MCF 10A (cell line): ENCODE measurements at regions of chr20 and their contacts with region 1.

Region 1: GRCh38 chr20:36439040-36439730 is 102.1 kb upstream of the MYL9 start:
- DNase-seq: peak; percentile 61
- H3K4me3 Mint-ChIP-seq: no peak overlapping the region
- H3K27ac Mint-ChIP-seq: no peak overlapping the region
- H3K4me1 Mint-ChIP-seq: no peaks in the 10 kb centered on the region
- H3K27me3 Mint-ChIP-seq: no peaks in the 10 kb centered on the region
- CTCF ChIP-seq: peak; percentile 96

Region 2: GRCh38 chr20:36181934-36182603 is 257.1 kb before region 1 on chr20:
- CTCF ChIA-PET with region 1: interaction called, 10 read pairs
- POLR2A ChIA-PET with region 1: no interaction called
- intact Hi-C with region 1: no loop called
- DNase-seq: peak; percentile 7
- H3K4me3 Mint-ChIP-seq: no peak overlapping the region
- H3K27ac Mint-ChIP-seq: no peak overlapping the region
- H3K4me1 Mint-ChIP-seq: no peaks in the 10 kb centered on the region
- H3K27me3 Mint-ChIP-seq: no peaks in the 10 kb centered on the region
- CTCF ChIP-seq: no peak

Region 3: GRCh38 chr20:36214684-36215256 is 224.4 kb before region 1 on chr20:
- CTCF ChIA-PET with region 1: interaction called, 56 read pairs
- POLR2A ChIA-PET with region 1: no interaction called
- intact Hi-C with region 1: loop called (anchors 1 kb)
- DNase-seq: peak; percentile 51
- H3K4me3 Mint-ChIP-seq: no peak overlapping the region
- H3K27ac Mint-ChIP-seq: no peak overlapping the region
- H3K4me1 Mint-ChIP-seq: no peaks in the 10 kb centered on the region
- H3K27me3 Mint-ChIP-seq: peaks cover 13% of the 10 kb centered on the region
- CTCF ChIP-seq: peak; percentile 56

Region 4: DNA sequence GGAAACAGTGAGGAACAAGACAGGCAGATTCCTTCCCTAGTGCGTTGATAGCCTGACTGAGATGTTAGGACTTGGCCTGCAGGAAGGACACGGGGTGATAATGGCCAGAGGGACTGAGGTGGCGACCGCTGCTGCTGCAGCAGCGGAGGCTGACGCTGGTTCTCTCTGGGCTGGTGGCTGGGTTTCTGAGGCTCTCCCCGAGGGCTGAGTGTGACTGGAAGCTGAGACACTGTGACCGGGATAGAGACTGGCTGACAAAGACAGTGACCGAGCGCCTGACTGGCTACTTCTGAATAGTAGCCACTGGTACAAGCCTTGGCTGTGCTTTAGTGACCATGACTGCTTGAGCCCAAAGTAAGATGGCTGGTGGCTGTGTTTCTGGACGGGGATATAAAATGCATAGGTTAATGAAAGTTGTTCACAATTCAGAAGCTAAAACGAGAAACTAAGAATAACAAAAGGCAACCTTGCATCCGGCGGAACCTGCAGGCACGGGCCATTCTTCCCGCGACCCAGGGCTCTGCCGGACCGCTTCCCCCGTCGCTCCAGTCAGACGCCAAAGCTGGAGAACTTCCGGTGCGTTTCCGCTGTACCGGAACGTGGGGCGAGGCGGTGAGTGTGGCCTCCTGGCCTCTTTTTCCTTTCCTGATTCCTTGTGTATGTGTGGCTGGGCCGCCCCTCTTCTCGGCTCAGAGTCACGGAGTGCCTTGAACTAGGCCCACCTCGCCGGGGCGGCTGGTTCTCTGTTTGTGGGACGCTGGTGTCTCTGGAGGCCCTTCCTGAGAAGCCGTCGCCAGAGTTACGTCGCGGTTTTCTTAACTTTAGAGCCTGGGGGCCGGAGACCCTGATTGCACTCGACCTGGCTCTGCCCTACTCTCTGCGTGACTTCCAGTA is 203.0 kb before region 1 on chr20 and contains the start of gene AAR2:
- CTCF ChIA-PET with region 1: interaction called, 31 read pairs
- POLR2A ChIA-PET with region 1: interaction called, 5 read pairs
- intact Hi-C with region 1: no loop called
- DNase-seq: peak; percentile 74
- H3K4me3 Mint-ChIP-seq: peak within 1 kb of the TSS; percentile 75
- H3K27ac Mint-ChIP-seq: peak within 1 kb of the TSS; percentile 98
- H3K4me1 Mint-ChIP-seq: peaks cover 15% of the 10 kb centered on the region
- H3K27me3 Mint-ChIP-seq: no peaks in the 10 kb centered on the region
- CTCF ChIP-seq: no peak
- total RNA-seq, gene AAR2: 21.0 and 24.7 TPM in 2 replicates

Region 5: DNA sequence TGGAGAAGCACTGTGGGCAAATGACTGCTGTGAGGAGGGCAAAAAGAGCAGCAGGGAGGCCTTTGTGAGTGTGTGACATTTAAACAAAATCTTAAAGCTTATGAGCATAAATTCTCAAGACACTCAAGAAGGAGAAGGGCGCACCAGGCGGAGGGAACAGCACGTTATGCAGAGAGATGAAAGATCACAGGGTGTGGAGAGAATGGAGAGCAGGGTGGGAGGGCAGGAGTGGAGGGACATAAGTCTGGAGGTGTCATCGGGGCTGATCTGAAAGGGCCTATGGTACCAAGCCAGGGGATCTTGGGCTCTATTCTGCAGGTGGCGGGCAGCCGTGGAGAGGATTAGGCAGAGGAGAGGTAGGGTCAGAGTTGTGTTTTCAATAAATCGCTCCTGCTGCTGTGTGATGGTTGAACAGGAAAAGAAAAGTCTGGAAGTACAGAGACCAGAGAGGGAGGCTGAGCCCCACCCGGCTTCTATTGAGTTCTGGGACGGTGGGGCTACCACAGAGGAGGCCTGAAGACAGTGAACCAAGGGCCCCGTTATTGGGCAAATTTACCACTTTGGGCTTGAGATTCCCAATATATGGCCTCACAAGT is 157.3 kb before region 1 on chr20:
- CTCF ChIA-PET with region 1: no interaction called
- POLR2A ChIA-PET with region 1: no interaction called
- intact Hi-C with region 1: no loop called
- DNase-seq: no peak
- H3K4me3 Mint-ChIP-seq: no peak overlapping the region
- H3K27ac Mint-ChIP-seq: no peak overlapping the region
- H3K4me1 Mint-ChIP-seq: no peaks in the 10 kb centered on the region
- H3K27me3 Mint-ChIP-seq: peaks cover 88% of the 10 kb centered on the region
- CTCF ChIP-seq: no peak

Region 6: GRCh38 chr20:36384022-36384619 is 55.1 kb before region 1 on chr20:
- CTCF ChIA-PET with region 1: interaction called, 11 read pairs
- POLR2A ChIA-PET with region 1: no interaction called
- intact Hi-C with region 1: no loop called
- DNase-seq: peak; percentile 74
- H3K4me3 Mint-ChIP-seq: no peak overlapping the region
- H3K27ac Mint-ChIP-seq: no peak overlapping the region
- H3K4me1 Mint-ChIP-seq: no peaks in the 10 kb centered on the region
- H3K27me3 Mint-ChIP-seq: peaks cover 71% of the 10 kb centered on the region
- CTCF ChIP-seq: peak; percentile 9

Region 7: GRCh38 chr20:36454698-36455427 is 15.7 kb after region 1 on chr20:
- CTCF ChIA-PET with region 1: interaction called, 25 read pairs
- POLR2A ChIA-PET with region 1: no interaction called
- intact Hi-C with region 1: no loop called
- DNase-seq: no peak
- H3K4me3 Mint-ChIP-seq: no peak overlapping the region
- H3K27ac Mint-ChIP-seq: no peak overlapping the region
- H3K4me1 Mint-ChIP-seq: no peaks in the 10 kb centered on the region
- H3K27me3 Mint-ChIP-seq: peaks cover 31% of the 10 kb centered on the region
- CTCF ChIP-seq: no peak